Left ventricle myocardium superior (tissue), 1 donor: ENCODE measurements at regions of chr7 and their contacts with region 1.

Region 1: DNA sequence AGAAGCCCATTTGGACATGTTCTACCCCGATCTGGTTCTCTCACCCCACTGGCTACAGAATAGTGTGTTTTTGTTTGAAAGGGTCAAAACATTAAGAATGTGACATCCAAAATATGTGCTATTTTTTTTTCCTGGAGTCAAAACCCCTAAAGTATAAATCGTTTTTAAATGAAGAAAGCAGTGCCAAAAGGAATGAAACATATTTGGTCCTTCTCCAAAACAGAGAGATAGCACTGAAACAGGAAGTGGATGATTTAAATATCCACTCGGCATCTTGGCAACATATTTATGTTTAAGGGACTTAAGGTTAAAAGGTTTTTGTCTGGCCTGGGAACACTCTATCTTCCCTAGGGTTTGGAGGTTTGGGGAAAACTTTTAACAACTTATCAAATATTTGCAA is 32.3 kb downstream of the CALD1 start:
- DNase-seq: no peak
- ATAC-seq: peak; percentile 41

Region 2: DNA sequence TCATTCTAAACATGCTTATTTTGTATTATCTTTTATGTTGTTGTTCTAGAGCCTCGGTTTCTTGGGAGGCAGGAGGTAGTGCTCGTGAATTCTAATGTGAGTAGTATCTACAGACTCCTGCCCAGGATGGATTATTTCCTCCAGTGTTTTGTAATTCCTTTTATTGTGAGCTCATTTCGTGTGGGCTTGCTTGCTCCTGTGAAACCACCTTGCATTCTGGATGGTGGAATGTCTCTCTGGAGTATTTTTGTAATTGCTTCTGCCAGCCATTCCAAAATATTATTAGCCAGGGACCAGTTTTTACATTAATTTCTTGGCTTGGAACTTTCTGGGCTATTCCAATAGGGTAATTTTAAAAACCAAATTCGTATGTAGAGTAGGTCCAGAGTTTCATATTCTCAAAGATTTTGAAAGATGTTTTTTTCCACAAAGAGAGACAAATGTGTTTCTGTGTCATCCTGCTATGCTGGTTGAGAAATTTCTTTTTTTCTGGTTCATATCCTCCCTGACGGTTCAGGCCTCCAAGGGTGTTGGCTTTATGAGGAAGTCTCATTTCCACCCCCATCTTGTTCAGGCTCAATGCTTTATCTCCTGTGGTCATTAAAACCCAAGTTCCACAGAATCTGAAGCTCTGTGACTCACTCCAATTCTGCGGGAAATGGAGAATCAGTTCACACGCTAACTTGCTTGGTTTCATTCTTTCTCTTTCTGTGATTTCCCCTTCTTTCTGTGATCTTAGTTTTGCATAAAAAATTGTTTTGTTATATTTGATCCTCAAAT is 74.0 kb before region 1 on chr7:
- intact Hi-C with region 1: loop called (anchors 2 kb)
- DNase-seq: no peak
- ATAC-seq: peak; percentile 64